Right ventricle myocardium inferior (tissue), 1 donor: ENCODE measurements at regions of chr1 and their contacts with region 1.

Region 1: DNA sequence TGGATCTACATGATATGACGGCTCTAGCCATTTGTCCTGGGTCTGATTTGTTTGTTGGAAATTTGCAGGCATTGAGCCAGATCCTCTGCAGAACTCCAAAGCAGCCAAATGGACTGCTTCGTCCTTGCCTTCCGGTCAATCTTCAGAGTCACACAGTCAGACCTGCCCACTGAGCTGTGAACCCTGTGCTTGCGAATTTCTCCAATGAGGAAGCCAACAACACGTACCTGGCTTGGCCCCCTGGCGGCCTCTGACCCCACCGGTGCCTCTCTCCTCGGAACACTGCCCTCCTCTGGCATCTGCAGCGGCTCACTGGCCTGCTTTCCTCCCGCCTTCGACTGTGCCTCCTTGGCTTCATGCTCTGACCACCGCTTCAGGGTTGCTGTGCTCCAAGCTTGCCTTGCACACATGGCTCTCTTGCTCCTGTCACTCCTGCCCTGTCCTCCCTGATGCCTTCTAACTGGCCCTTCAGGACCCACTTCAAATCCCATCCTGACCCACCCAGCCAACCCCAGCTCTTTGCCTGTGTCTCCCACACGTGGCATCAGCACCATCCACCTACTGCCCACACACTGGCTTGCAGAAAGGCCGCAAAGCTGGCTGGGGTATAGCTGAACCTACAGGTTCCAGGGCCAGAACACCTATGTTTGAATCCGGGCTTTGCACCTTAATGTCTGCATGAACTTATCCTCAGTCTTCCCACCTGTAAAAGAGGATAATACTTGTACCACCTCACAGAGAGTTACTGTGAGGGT is 128.2 kb downstream of the KCNN3 start:
- DNase-seq: no peak
- ATAC-seq: peak; percentile 15

Region 2: DNA sequence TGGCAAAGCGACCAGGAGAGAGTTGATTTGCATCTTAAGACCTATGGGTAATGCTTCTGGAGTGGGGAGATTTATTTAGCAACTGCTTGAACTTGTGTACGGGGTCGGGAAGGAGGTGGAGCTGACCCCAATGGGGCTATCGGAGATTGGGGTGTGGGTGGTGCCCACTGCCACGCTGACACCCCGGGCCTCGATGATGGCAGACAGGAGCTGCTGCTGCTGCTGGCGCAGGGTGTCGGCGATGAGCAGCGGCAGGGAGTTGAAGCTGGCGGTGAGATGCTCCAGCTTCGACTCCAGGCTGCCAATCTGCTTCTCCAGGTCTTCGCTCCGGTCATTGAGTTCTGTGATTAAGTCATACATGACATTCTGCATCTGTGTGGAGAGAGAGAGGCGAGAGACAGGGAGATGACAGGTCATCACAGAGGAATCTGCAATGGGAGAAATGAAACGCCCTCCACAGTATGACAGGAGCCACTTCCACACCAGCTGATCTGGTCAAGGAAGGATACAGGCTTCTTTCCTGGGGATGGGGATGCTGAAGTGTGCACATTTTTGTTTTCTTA is 33.9 kb before region 1 on chr1:
- intact Hi-C with region 1: loop called (anchors 5 kb)
- DNase-seq: no peak
- ATAC-seq: no peak

Region 3: GRCh38 chr1:154720328-154721297 is 21.3 kb before region 1 on chr1:
- intact Hi-C with region 1: no loop called
- DNase-seq: no peak
- ATAC-seq: peak; percentile 49

Region 4: DNA sequence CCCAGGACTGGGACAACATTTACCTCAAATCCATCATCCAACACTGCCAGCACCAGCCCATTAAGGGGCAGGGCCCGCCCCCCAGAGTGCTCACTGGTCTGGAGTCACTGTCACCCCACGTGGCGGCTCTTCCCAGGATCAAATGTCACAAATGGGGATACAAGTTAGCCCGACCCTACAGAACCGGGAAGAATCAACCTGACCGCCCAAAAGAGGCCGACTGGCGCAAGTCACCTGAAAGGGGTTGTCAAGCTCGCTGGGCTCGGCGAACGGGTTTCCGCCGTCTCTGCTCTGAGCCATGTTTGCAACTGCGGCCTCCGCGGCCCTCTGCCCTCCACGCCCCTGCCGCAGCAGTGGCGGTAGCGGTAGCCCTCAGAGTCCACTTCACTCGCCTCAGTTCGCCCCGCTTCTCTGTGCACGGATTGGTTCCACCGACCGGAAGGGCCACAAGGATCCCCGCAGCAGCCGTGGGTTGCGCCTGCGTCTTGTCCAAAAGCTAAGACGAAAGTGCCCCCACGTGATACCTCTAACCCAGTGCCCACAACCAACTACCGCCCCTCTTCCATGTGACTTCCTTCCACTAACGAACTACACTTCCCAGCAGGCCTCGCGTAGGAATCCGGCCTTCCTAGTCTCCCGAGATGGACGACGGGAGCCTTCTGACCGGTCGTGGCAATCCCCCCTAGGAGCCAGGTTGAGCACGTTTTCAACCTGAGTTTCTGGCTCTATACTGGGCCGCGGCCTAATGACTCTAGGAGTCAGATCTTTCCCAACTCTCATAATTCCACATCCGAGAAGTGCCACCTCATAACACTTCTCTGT is 520.1 kb after region 1 on chr1 and contains the start of gene SCAMP3:
- intact Hi-C with region 1: no loop called
- DNase-seq: peak; percentile 96
- ATAC-seq: peak; percentile 98
- total RNA-seq, gene SCAMP3: 55.4 TPM